Naive thymus-derived CD4-positive, alpha-beta T cell (primary cell): ENCODE measurements at regions of chr3 and their contacts with region 1.

Region 1: GRCh38 chr3:50350527-50351322 is at the starts of genes CYB561D2 and NPRL2:
- DNase-seq: peak; percentile 97 to 100 (median 99)
- ATAC-seq: peak; percentile 95
- H3K4me3 ChIP-seq: peak within 1 kb of the TSS; percentile 90
- H3K4me3 Mint-ChIP-seq: peak within 1 kb of the TSS; percentile 86 to 99 (median 96)
- H3K27ac ChIP-seq: peak within 1 kb of the TSS; percentile 93
- H3K27ac Mint-ChIP-seq: peak within 1 kb of the TSS; percentile 96 to 100 (median 99)
- H3K4me1 ChIP-seq: peaks cover 26 to 32% of the 10 kb centered on the region in 2 donors
- H3K4me1 Mint-ChIP-seq: peaks cover 24 to 78% (median 59%) of the 10 kb centered on the region in 7 donors
- H3K27me3 ChIP-seq: no peaks in the 10 kb centered on the region
- H3K27me3 Mint-ChIP-seq: no peaks in the 10 kb centered on the region
- total RNA-seq, gene CYB561D2: 23.3 to 42.6 (median 32.8) TPM
- total RNA-seq, gene NPRL2: 35.3 to 48.9 (median 47.7) TPM

Region 2: GRCh38 chr3:50321336-50322114 is 29.2 kb before region 1 on chr3:
- CTCF ChIA-PET with region 1: interaction called, 3 read pairs
- POLR2A ChIA-PET with region 1: interaction called, 656 read pairs
- intact Hi-C with region 1: loop called in 1 of 2 experiments (anchors 1 kb)
- DNase-seq: peak; percentile 67 to 90 (median 83)
- ATAC-seq: peak; percentile 83
- H3K4me3 ChIP-seq: peak overlapping the region; percentile 97
- H3K4me3 Mint-ChIP-seq: peak overlapping the region; percentile 74 to 90 (median 82)
- H3K27ac ChIP-seq: peak overlapping the region; percentile 95
- H3K27ac Mint-ChIP-seq: peak overlapping the region; percentile 40 to 96 (median 93)
- H3K4me1 ChIP-seq: peaks cover 12 to 21% of the 10 kb centered on the region in 2 donors
- H3K4me1 Mint-ChIP-seq: peaks cover 21 to 45% (median 36%) of the 10 kb centered on the region in 7 donors
- H3K27me3 ChIP-seq: no peaks in the 10 kb centered on the region
- H3K27me3 Mint-ChIP-seq: no peaks in the 10 kb centered on the region

Region 3: GRCh38 chr3:50337191-50337841 is 13.4 kb before region 1 on chr3:
- CTCF ChIA-PET with region 1: interaction called, 10 read pairs
- POLR2A ChIA-PET with region 1: interaction called, 656 read pairs
- intact Hi-C with region 1: loop called (anchors 1 kb)
- DNase-seq: peak; percentile 83 to 98 (median 91)
- ATAC-seq: peak; percentile 88
- H3K4me3 ChIP-seq: peak overlapping the region; percentile 83
- H3K4me3 Mint-ChIP-seq: peak overlapping the region; percentile 92 to 97 (median 95)
- H3K27ac ChIP-seq: peak overlapping the region; percentile 92
- H3K27ac Mint-ChIP-seq: peak overlapping the region; percentile 92 to 97 (median 96)
- H3K4me1 ChIP-seq: peaks cover 43 to 58% of the 10 kb centered on the region in 2 donors
- H3K4me1 Mint-ChIP-seq: peaks cover 35 to 73% (median 68%) of the 10 kb centered on the region in 7 donors
- H3K27me3 ChIP-seq: no peaks in the 10 kb centered on the region
- H3K27me3 Mint-ChIP-seq: peaks cover 0 to 3% (median 0%) of the 10 kb centered on the region in 5 donors

Region 4: GRCh38 chr3:50436114-50436674 is 85.5 kb after region 1 on chr3:
- CTCF ChIA-PET with region 1: no interaction called
- POLR2A ChIA-PET with region 1: no interaction called
- intact Hi-C with region 1: loop called in 1 of 2 experiments (anchors 1 kb)
- DNase-seq: peak; percentile 48 to 81 (median 68)
- ATAC-seq: peak; percentile 92
- H3K4me3 ChIP-seq: no peak overlapping the region
- H3K4me3 Mint-ChIP-seq: no peak overlapping the region
- H3K27ac ChIP-seq: no peak overlapping the region
- H3K27ac Mint-ChIP-seq: no peak overlapping the region
- H3K4me1 ChIP-seq: no peaks in the 10 kb centered on the region
- H3K4me1 Mint-ChIP-seq: peaks cover 0 to 20% (median 4%) of the 10 kb centered on the region in 7 donors
- H3K27me3 ChIP-seq: no peaks in the 10 kb centered on the region
- H3K27me3 Mint-ChIP-seq: peaks cover 0 to 10% (median 0%) of the 10 kb centered on the region in 5 donors

Region 5: GRCh38 chr3:50550079-50550741 is 199.5 kb after region 1 on chr3:
- CTCF ChIA-PET with region 1: interaction called, 4 read pairs
- POLR2A ChIA-PET with region 1: interaction called, 3 read pairs
- intact Hi-C with region 1: loop called in 1 of 2 experiments (anchors 2 kb)
- DNase-seq: peak; percentile 25 to 63 (median 45)
- ATAC-seq: peak; percentile 73
- H3K4me3 ChIP-seq: no peak overlapping the region
- H3K4me3 Mint-ChIP-seq: no peak overlapping the region
- H3K27ac ChIP-seq: no peak overlapping the region
- H3K27ac Mint-ChIP-seq: peak overlapping the region in 1 of 9 donors; percentile 28
- H3K4me1 ChIP-seq: no peaks in the 10 kb centered on the region
- H3K4me1 Mint-ChIP-seq: peaks cover 0 to 10% (median 0%) of the 10 kb centered on the region in 7 donors
- H3K27me3 ChIP-seq: no peaks in the 10 kb centered on the region
- H3K27me3 Mint-ChIP-seq: peaks cover 0 to under 1% (median 0%) of the 10 kb centered on the region in 5 donors

Region 6: GRCh38 chr3:50600841-50601591 is 250.3 kb after region 1 on chr3:
- CTCF ChIA-PET with region 1: no interaction called
- POLR2A ChIA-PET with region 1: no interaction called
- intact Hi-C with region 1: no loop called
- DNase-seq: peak; percentile 43 to 90 (median 58)
- ATAC-seq: peak; percentile 84
- H3K4me3 ChIP-seq: peak overlapping the region; percentile 57
- H3K4me3 Mint-ChIP-seq: peak overlapping the region; percentile 71 to 97 (median 84)
- H3K27ac ChIP-seq: peak overlapping the region; percentile 93
- H3K27ac Mint-ChIP-seq: peak overlapping the region; percentile 89 to 99 (median 95)
- H3K4me1 ChIP-seq: peaks cover 67 to 71% of the 10 kb centered on the region in 2 donors
- H3K4me1 Mint-ChIP-seq: peaks cover 63 to 83% (median 77%) of the 10 kb centered on the region in 7 donors
- H3K27me3 ChIP-seq: no peaks in the 10 kb centered on the region
- H3K27me3 Mint-ChIP-seq: no peaks in the 10 kb centered on the region